ENCODE measurements at regions of chr12 and their contacts with region 1.

Region 1: GRCh38 chr12:1795785-1796514 is 24.4 kb upstream of the LRTM2 start:
- DNase-seq: peak; percentile 95
- CTCF ChIP-seq: peak; percentile 96

Region 2: DNA sequence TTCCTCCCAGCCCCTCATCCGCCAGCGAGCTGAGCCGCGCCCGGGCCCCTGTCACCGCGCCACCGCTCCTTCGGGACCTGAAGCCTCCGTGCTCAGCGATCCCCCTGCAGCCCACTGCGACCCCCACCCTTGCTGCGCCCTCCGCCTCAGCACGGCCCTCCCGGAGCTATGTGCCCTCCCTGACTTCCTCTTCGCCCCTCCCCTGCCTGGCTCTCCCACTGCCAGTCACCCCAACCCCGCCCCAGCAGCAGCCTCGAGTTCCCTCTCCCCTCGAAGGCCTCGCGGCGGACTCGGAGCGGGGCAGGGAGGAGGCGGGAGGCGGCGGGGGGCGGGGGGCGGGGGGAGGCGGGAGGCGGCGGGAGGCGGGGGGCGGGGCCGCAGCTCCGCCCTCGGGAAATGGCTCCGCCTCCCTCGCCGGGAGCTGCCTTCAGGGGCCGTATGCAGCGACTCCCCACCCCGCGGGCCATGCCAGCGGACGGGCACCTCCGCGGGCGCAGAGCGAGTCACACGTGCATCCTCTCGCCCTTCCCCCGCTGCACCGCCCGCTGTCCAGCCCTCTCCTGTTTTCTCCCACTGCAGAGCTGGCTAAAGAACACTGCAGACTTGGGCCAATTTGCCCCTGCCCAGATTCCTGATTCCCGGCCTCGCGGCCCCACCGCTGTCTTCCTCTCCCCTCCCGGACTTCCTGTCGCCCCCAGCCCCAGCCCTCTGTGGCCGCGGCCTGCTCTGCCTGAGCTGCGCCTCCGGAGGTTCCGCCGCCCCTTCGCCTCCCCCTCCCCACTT is 134.2 kb before region 1 on chr12:
- CTCF ChIA-PET with region 1: interaction called, 627 read pairs
- POLR2A ChIA-PET with region 1: no interaction called
- DNase-seq: peak; percentile 88
- CTCF ChIP-seq: no peak

Region 3: DNA sequence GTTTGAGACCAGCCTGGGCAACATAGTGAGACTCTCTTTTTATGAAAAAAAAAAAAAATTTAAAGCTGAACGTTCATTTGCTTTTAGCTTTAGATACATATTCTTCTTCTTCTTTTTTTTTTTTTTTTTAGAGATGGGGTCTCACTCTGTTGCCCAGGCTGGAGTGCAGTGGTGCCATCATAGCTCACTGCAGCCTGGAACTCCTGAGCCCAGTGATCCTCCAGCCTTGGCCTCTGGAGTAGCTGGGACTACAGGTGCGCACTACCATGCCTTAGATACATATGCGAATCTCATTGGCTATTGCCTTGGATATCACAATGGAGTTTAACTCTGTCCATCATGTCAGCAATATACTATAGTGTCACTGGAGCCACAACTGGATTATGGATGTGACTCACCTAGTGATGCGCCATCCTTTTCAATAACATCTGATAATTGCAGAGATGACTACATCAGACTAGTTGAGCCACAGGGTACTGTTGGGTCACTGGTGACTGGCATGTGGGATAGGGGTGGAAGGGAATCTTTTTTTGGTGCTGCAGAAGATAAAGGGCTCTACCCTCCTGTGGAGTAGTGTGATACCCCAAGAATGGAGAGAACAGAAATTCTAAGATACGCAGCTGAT is 107.8 kb before region 1 on chr12:
- CTCF ChIA-PET with region 1: interaction called, 12 read pairs
- POLR2A ChIA-PET with region 1: no interaction called
- DNase-seq: no peak
- CTCF ChIP-seq: no peak

Region 4: DNA sequence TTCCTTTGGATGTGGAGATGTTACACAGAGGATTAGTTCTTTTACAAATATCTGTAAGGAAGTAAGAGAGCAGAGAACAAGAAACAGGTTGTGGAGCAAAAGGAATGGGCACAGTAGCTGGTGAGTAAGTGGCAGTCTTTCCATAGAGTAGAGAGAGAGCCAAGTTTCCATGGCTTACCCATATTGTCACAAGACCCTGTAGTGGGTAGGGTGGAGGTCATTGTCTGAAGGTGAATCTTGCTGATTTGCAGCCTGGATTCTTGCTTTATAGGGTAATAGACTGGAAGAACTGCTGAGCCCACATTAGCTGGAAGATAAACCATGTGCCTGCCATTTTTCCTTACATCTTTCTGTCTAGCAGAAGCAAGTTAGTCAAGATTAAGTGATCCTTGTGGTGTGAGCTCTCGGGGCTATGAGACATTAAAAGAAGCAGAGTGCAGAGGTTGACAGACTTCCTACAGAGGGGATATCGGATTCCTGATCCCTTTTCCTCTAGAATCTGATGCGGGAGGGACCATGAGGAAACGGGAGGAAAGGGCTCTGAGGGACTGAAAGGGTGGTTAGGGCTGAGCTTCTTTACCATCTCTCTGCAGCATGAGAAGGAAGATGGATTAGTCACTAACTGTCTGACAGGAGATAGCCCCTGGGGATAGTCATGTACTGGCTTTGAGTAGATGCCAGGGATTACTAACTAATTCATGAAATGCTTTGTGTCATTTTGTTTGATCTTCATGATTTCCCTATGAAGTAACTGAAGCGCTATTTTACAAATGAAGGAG is 19.6 kb before region 1 on chr12:
- CTCF ChIA-PET with region 1: interaction called, 25 read pairs
- POLR2A ChIA-PET with region 1: no interaction called
- DNase-seq: no peak
- CTCF ChIP-seq: no peak

Measured in GM10248 (cell line).